HepG2 (cell line): ENCODE measurements at regions of chr1 and their contacts with region 1.

Region 1: GRCh38 chr1:15741183-15741850 is 982 bp upstream of the TMEM82 start:
- DNase-seq: peak; percentile 76
- ATAC-seq: peak; percentile 77
- H3K4me3 ChIP-seq: peak overlapping the region; percentile 4 to 67 (median 39); a peak in 4 of 6 replicates
- H3K27ac ChIP-seq: no peak overlapping the region
- H3K4me1 ChIP-seq: peaks cover 79% of the 10 kb centered on the region
- H3K27me3 ChIP-seq: no peaks in the 10 kb centered on the region
- CTCF ChIP-seq: peak; percentile 99
- EP300 ChIP-seq: no peak
- POLR2A ChIP-seq: no peak
- RAD21 ChIP-seq: peak; percentile 86

Region 2: GRCh38 chr1:15684468-15685291 is 56.6 kb before region 1 on chr1:
- CTCF ChIA-PET with region 1: no interaction called
- POLR2A ChIA-PET with region 1: no interaction called
- in situ Hi-C with region 1: no loop called
- intact Hi-C with region 1: loop called (anchors 10 kb)
- DNase-seq: no peak
- ATAC-seq: peak; percentile 59
- H3K4me3 ChIP-seq: peak overlapping the region; percentile 59 to 92 (median 88)
- H3K27ac ChIP-seq: peak overlapping the region; percentile 52
- H3K4me1 ChIP-seq: peaks cover 62% of the 10 kb centered on the region
- H3K27me3 ChIP-seq: no peaks in the 10 kb centered on the region
- CTCF ChIP-seq: no peak
- EP300 ChIP-seq: no peak
- POLR2A ChIP-seq: no peak
- RAD21 ChIP-seq: no peak